Activated naive CD4-positive, alpha-beta T cell treated with anti-CD3 and anti-CD28 coated beads for 36 hours (primary cell): ENCODE measurements at regions of chr12 and their contacts with region 1.

Region 1: GRCh38 chr12:48969833-48970701 is 1.5 kb downstream of the WNT10B start:
- DNase-seq: peak; percentile 48
- H3K4me3 Mint-ChIP-seq: no peak overlapping the region
- H3K27ac Mint-ChIP-seq: no peak overlapping the region
- H3K4me1 Mint-ChIP-seq: peaks cover 31% of the 10 kb centered on the region
- H3K27me3 Mint-ChIP-seq: peaks cover 42% of the 10 kb centered on the region

Region 2: GRCh38 chr12:48957141-48958048 is 12.7 kb before region 1 on chr12 and contains the start of gene ARF3:
- CTCF ChIA-PET with region 1: interaction called, 8 read pairs
- intact Hi-C with region 1: loop called (anchors 2 kb)
- DNase-seq: peak; percentile 95
- H3K4me3 Mint-ChIP-seq: peak within 1 kb of the TSS; percentile 97
- H3K27ac Mint-ChIP-seq: peak within 1 kb of the TSS; percentile 86
- H3K4me1 Mint-ChIP-seq: peaks cover 29% of the 10 kb centered on the region
- H3K27me3 Mint-ChIP-seq: peaks cover 2% of the 10 kb centered on the region
- total RNA-seq, gene ARF3: 84.4 to 87.3 TPM

Region 3: DNA sequence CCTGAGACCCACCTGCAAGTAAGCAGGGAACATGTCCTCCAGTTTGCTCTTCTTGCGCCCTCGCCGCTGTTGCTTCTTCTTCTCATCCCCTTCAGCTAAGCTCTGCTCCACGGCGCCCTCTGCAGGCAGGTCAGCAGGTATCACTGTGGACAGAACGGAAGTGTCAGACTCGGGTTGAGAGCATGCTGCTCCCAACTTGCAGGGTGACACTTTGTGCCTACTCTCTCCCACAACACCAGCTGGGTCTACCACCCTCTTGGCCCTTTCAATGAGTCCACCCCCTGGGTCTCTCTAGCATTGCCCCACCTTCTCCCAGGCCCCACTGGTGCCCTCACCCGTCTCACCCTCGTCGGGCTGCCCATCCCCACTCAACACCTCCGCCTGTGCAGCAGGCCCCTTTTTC is 73.8 kb after region 1 on chr12:
- CTCF ChIA-PET with region 1: no interaction called
- intact Hi-C with region 1: no loop called
- DNase-seq: peak; percentile 85
- H3K4me3 Mint-ChIP-seq: no peak overlapping the region
- H3K27ac Mint-ChIP-seq: no peak overlapping the region
- H3K4me1 Mint-ChIP-seq: peaks cover 2% of the 10 kb centered on the region
- H3K27me3 Mint-ChIP-seq: no peaks in the 10 kb centered on the region